Mammary epithelial cell (primary cell): ENCODE measurements at regions of chr1 and their contacts with region 1.

Region 1: DNA sequence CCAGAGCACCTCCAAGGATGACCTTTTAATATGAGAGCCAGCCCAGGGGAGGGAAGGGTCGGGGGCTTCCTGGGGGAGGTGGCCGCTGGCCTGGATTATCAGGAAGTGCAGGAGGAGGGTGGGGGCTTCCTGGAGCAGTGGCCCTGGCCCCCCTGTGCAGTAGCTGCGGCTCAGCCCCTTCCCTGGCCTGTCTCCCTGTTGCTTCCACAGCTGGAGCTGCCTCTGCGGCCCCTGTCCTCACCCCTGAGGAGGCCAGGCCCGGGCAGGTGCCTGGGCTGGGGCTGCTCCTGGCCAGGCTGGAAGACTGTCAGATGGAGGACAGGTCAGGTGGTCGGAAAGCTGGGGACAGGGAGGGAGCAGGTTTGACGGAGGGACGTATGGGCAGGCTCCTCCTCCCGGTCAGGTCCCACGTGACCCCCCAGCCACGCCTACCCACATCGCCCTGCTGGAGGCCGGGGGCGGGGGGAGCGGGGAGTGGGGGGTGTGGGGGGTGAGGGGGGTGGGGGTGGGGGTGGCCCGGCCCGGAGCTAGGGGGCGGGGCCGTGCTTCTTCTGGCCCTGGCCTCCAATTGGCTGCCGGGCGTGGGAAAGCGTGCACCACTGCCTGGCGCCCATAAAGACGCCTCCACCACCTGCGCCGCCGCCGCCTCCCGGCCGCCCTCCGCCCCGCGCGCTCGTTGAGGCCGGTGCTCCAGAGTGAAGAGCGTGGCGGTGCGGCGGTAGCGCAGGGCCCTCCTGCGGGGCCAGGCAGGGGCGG is 10.2 kb upstream of the TNFRSF14 start:
- DNase-seq: peak; percentile 57
- H3K4me3 ChIP-seq: peak overlapping the region in 2 of 3 experiments; percentile 43 to 44
- H3K27ac ChIP-seq: no peak overlapping the region
- H3K4me1 ChIP-seq: peaks cover 31% of the 10 kb centered on the region
- H3K27me3 ChIP-seq: no peaks in the 10 kb centered on the region
- CTCF ChIP-seq: no peak

Region 2: GRCh38 chr1:2412519-2413233 is 133.3 kb before region 1 on chr1 and contains the start of gene PEX10:
- CTCF ChIA-PET with region 1: interaction called, 6 read pairs
- dilution Hi-C with region 1: no loop called
- in situ Hi-C with region 1: loop called in 1 of 2 experiments (anchors 5 kb)
- intact Hi-C with region 1: loop called (anchors 1 kb)
- DNase-seq: peak; percentile 93
- H3K4me3 ChIP-seq: peak within 1 kb of the TSS; percentile 70 to 97 (median 95)
- H3K27ac ChIP-seq: peak within 1 kb of the TSS; percentile 72
- H3K4me1 ChIP-seq: peaks cover 31% of the 10 kb centered on the region
- H3K27me3 ChIP-seq: no peaks in the 10 kb centered on the region
- CTCF ChIP-seq: no peak
- total RNA-seq, gene PEX10: 29.5 to 32.8 TPM

Region 3: GRCh38 chr1:2494323-2494693 is 51.6 kb before region 1 on chr1:
- CTCF ChIA-PET with region 1: no interaction called
- dilution Hi-C with region 1: no loop called
- in situ Hi-C with region 1: no loop called
- intact Hi-C with region 1: loop called (anchors 1 kb)
- DNase-seq: peak; percentile 97
- H3K4me3 ChIP-seq: no peak overlapping the region
- H3K27ac ChIP-seq: no peak overlapping the region
- H3K4me1 ChIP-seq: peaks cover 23% of the 10 kb centered on the region
- H3K27me3 ChIP-seq: no peaks in the 10 kb centered on the region
- CTCF ChIP-seq: no peak

Region 4: DNA sequence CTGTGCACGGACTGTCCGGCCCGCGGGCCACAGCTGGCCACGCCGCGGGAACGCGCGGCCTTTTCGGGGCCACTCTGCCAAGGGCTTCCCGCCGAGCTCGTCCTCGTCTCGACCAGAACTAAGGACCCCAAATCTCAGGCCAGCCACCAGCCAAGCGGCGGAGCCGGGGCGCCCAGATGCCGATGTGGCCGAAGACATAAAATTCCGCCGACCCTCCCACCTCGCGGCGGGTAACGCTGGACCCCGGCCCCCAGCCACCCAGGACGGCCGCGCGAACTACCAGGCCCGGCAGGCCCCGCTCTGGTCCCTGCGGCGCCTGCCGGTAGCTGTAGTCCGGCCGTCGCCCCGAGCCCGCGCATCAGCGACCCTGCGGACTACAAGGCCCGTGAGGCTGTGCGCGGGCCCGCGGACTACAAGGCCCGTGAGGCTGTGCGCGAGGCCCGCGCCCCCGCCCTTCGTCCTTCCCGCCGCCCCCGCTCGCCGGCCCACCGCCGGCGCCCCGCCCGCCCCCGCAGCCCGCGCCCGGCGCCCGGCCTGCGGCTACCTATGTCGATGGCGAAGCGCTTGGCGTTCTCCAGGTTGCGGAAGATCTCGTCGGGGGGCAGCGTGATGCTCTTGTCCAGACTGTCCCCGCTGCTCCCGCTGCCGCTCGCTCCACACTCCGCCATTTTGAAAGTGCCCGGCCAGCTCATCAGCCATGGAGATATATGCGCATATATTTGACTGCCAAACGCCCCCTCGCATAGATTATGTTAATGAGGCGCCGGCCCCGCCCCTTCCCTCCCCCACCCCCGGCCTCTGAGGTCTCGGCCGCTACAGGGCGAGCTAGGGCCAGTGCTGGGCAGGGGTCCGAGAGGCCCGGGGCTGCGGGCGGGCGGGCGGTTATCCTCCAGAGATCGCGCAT is 19.8 kb before region 1 on chr1 and contains the start of gene PANK4:
- CTCF ChIA-PET with region 1: no interaction called
- dilution Hi-C with region 1: no loop called
- in situ Hi-C with region 1: no loop called
- intact Hi-C with region 1: loop called (anchors 1 kb)
- DNase-seq: peak; percentile 90
- H3K4me3 ChIP-seq: peak within 1 kb of the TSS; percentile 70 to 98 (median 94)
- H3K27ac ChIP-seq: peak within 1 kb of the TSS; percentile 65
- H3K4me1 ChIP-seq: peaks cover 43% of the 10 kb centered on the region
- H3K27me3 ChIP-seq: peaks cover 4% of the 10 kb centered on the region
- CTCF ChIP-seq: no peak
- total RNA-seq, gene PANK4: 14.2 to 28.5 TPM

Region 5: DNA sequence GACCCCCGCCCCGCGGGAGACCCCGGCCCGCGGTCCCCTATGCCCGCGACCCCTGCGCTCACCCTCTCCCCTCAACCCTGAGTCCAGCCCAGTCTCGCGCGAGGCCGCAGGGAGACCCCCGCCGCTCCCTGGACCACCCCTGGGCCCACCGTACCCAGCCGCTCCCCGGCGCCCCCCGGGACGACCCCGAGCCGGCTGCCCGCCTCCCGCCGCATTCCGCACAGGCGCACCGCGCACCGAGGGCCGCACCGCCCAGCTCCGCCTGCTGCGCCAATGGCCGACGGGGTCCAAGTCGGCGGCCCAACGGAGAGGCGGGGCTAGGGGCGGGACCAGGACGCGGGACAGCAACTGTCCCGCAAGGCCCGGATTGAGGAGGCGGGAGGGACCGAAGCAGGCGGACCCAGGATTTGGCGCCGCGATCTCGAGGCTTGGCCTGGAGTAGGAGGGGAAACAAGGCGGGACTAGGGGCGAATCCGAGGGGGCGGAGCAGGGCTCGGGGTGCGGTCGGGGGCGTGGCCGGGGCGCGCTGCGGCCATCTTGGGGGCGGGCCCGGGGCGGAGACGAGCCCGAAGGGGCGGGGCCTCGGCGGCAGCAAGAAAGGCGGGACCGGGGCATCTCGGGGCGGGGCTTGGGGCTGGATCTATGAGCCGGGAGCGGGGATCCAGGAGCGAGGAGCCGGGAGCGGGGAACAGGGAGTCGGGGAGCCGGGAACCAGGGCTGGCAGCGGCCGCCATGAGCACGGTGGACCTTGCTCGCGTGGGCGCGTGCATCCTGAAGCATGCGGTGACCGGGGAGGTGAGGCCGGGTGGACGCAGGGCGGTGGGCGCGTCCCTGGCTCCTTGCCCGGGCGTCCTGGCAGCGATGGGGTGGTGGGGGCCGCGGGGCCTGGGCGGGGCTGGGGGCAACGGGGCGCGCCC is 40.5 kb after region 1 on chr1 and contains the start of gene PRXL2B:
- CTCF ChIA-PET with region 1: interaction called, 20 read pairs
- dilution Hi-C with region 1: no loop called
- in situ Hi-C with region 1: no loop called
- intact Hi-C with region 1: no loop called
- DNase-seq: peak; percentile 99
- H3K4me3 ChIP-seq: peak within 1 kb of the TSS; percentile 75 to 91 (median 78)
- H3K27ac ChIP-seq: peak within 1 kb of the TSS; percentile 35
- H3K4me1 ChIP-seq: peaks cover 11% of the 10 kb centered on the region
- H3K27me3 ChIP-seq: no peaks in the 10 kb centered on the region
- CTCF ChIP-seq: no peak
- total RNA-seq, gene PRXL2B: 15.7 to 29.1 TPM

Region 6: DNA sequence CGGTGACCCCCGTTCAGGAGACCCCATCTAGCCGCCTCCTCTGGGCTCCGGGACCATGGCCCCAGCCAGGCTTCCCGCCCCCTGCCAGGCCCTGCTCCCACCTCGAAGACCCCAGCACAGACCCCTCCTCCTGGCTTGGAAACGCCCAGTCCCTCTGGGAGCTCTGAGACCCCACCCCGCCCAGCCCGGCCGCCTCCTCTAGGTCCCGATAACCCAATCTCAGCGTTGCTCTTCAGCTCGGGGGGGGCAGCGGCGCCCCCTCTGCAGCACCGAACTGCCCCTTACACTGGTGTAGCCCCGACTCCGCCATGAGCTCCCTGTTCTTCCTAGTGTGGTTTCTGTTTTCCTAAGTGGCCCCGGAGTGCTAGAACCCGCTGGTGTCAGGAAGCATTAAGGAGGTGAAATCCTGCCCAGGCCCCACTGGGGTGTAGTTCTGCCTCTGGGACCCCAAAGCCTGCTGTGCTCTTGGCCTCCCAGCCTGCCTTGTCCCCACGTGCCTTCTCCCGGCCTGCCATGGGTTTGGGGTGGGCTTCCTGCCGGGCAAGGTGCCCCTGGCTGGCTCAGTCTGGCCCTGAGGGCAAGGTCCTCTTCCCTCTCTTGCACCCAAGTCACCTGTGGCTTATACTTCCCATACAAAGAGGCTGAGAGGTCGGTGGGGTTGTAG is 97.6 kb after region 1 on chr1:
- CTCF ChIA-PET with region 1: no interaction called
- dilution Hi-C with region 1: no loop called
- in situ Hi-C with region 1: no loop called
- intact Hi-C with region 1: no loop called
- DNase-seq: no peak
- H3K4me3 ChIP-seq: peak overlapping the region; percentile 64 to 91 (median 69)
- H3K27ac ChIP-seq: no peak overlapping the region
- H3K4me1 ChIP-seq: peaks cover 18% of the 10 kb centered on the region
- H3K27me3 ChIP-seq: no peaks in the 10 kb centered on the region
- CTCF ChIP-seq: no peak